A549 (cell line): ENCODE measurements at regions of chr20 and their contacts with region 1.

Region 1: GRCh38 chr20:31661625-31662371 is 24.1 kb downstream of the COX4I2 start:
- DNase-seq: peak; percentile 68 to 83
- ATAC-seq: peak; percentile 72 to 84
- H3K4me3 ChIP-seq: peak overlapping the region; percentile 32
- H3K27ac ChIP-seq: peak overlapping the region; percentile 85 to 88
- H3K4me1 ChIP-seq: peaks cover 60% of the 10 kb centered on the region
- CTCF ChIP-seq: peak; percentile 58
- EP300 ChIP-seq: no peak
- POLR2A ChIP-seq: peak; percentile 38
- RAD21 ChIP-seq: peak; percentile 64 to 85

Region 2: GRCh38 chr20:31551581-31552081 is 110.2 kb before region 1 on chr20:
- CTCF ChIA-PET with region 1: no interaction called
- POLR2A ChIA-PET with region 1: no interaction called
- DNase-seq: no peak
- ATAC-seq: no peak
- H3K4me3 ChIP-seq: no peak overlapping the region
- H3K27ac ChIP-seq: no peak overlapping the region
- H3K4me1 ChIP-seq: no peaks in the 10 kb centered on the region
- CTCF ChIP-seq: no peak
- EP300 ChIP-seq: no peak
- POLR2A ChIP-seq: no peak
- RAD21 ChIP-seq: no peak

Region 3: GRCh38 chr20:31595654-31596411 is 66.0 kb before region 1 on chr20:
- CTCF ChIA-PET with region 1: no interaction called
- POLR2A ChIA-PET with region 1: no interaction called
- DNase-seq: peak; percentile 74 to 95
- ATAC-seq: peak; percentile 68 to 74
- H3K4me3 ChIP-seq: peak overlapping the region; percentile 62
- H3K27ac ChIP-seq: peak overlapping the region; percentile 98
- H3K4me1 ChIP-seq: peaks cover 48% of the 10 kb centered on the region
- CTCF ChIP-seq: no peak
- EP300 ChIP-seq: peak in 1 of 2 experiments; percentile 55; a peak in 2 of 5 replicates
- POLR2A ChIP-seq: peak; percentile 42
- RAD21 ChIP-seq: no peak

Region 4: DNA sequence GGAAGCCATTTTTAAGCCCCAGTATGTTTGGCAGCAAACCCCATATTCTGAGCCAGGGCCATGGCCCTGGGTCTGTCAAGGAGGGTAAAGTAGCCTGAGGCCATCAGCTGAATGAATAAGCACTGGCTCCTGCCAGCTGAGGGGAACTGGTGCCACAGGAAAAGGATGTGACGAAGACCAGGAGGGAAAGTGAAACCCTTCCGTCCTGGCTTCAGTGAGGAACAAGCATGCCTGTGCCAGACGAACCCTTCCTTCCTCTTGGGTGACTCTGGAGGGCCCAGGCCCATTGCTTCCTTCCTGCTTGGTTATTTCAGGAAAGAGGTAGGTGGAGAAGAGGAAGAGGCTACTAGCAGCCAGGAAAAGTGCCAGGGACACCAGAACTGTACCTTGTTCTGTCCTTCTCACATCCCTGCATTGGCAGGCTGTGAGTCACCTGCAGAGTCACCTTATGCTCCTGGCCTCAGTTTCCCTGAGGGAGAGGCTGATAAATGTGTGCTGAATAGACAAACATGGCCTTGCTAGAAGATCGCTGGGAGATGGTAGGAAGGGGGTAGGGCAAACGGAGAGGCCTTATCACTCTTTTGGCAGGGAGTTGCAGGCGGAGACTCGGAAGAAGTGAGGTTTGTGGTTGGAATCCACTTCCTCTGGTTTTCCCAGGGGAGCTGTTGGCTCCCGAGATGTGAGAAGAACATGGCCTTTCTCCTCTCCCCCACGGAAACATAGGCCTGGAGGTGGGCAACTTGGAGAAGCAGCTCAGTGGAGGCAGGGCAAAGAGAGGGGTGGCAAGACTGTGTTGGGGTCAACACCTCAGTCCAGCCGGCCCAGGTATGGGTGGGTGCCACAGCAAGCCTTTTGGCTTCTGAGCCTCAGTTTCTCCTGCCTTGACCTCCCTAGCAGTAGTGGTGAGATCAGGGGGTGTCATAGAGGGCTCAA is 13.4 kb after region 1 on chr20:
- CTCF ChIA-PET with region 1: interaction called, 22 read pairs
- POLR2A ChIA-PET with region 1: interaction called, 5 read pairs
- DNase-seq: no peak
- ATAC-seq: peak in 1 of 2 experiments; percentile 10; a peak in 1 of 6 replicates
- H3K4me3 ChIP-seq: no peak overlapping the region
- H3K27ac ChIP-seq: peak overlapping the region; percentile 25 to 75; a peak in 5 of 6 replicates
- H3K4me1 ChIP-seq: peaks cover 97% of the 10 kb centered on the region
- CTCF ChIP-seq: no peak
- EP300 ChIP-seq: no peak
- POLR2A ChIP-seq: no peak
- RAD21 ChIP-seq: no peak

Region 5: DNA sequence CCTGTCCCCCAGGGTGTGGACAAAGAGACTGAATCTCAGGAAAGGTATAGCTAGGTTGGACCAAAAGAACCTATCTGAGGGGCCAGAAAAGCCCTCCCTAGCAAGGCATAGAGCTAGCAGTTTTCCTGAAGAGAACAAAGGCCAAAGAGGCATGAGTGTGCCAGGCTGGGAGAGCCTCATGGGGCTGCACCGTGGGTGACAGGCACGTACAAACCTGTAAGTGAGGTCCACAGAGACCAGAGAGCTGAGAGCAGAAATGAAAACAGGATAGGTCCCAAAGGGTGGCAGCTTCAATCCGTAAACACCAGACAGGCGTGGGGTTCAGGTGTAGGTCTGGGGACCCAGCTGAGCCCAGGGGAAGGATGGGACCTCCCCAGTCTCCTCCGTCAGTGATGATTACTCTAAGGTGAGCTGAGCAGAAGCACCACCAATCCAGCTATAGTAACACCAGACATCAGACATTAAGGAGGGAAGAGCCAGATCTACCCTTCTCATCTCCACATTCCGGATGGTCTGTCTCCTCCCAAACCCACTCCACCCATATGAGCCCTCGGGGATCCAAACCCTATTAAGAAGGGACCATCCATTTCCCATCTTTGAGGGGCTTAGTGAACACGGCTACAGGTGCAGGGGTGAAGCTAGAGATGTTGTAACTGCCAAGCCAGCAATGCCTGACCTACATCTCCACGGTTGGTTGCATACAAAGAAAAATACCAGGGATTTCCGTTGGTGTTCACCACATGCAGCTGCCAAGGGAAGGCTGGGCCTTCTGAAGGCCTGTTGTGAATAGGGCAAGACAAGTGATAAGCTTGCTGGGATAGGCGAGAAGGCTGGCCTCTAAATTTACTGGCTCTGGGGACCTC is 22.6 kb after region 1 on chr20:
- CTCF ChIA-PET with region 1: interaction called, 23 read pairs
- POLR2A ChIA-PET with region 1: no interaction called
- DNase-seq: no peak
- ATAC-seq: no peak
- H3K4me3 ChIP-seq: no peak overlapping the region
- H3K27ac ChIP-seq: peak overlapping the region in 1 of 2 experiments; percentile 68; a peak in 3 of 6 replicates
- H3K4me1 ChIP-seq: peaks cover 93% of the 10 kb centered on the region
- CTCF ChIP-seq: no peak
- EP300 ChIP-seq: no peak
- POLR2A ChIP-seq: no peak
- RAD21 ChIP-seq: no peak

Region 6: GRCh38 chr20:31691646-31692275 is 30.0 kb after region 1 on chr20:
- CTCF ChIA-PET with region 1: interaction called, 21 read pairs
- POLR2A ChIA-PET with region 1: interaction called, 11 read pairs
- DNase-seq: no peak
- ATAC-seq: no peak
- H3K4me3 ChIP-seq: no peak overlapping the region
- H3K27ac ChIP-seq: peak overlapping the region; percentile 49 to 95
- H3K4me1 ChIP-seq: peaks cover 94% of the 10 kb centered on the region
- CTCF ChIP-seq: no peak
- EP300 ChIP-seq: no peak
- POLR2A ChIP-seq: no peak
- RAD21 ChIP-seq: no peak

Region 7: GRCh38 chr20:31698803-31699718 is 37.3 kb after region 1 on chr20:
- CTCF ChIA-PET with region 1: interaction called, 22 read pairs
- POLR2A ChIA-PET with region 1: no interaction called
- DNase-seq: peak; percentile 63 to 87
- ATAC-seq: peak; percentile 59 to 74
- H3K4me3 ChIP-seq: no peak overlapping the region
- H3K27ac ChIP-seq: peak overlapping the region; percentile 89 to 95
- H3K4me1 ChIP-seq: peaks cover 100% of the 10 kb centered on the region
- CTCF ChIP-seq: no peak
- EP300 ChIP-seq: peak; percentile 39 to 58; a peak in 2 of 5 replicates
- POLR2A ChIP-seq: no peak
- RAD21 ChIP-seq: no peak

Region 8: GRCh38 chr20:31712564-31713311 is 50.9 kb after region 1 on chr20:
- CTCF ChIA-PET with region 1: interaction called, 489 read pairs
- POLR2A ChIA-PET with region 1: interaction called, 14 read pairs
- DNase-seq: peak; percentile 80 to 95
- ATAC-seq: peak; percentile 63 to 77
- H3K4me3 ChIP-seq: peak overlapping the region; percentile 13; the same call in 1 of the 3 replicates
- H3K27ac ChIP-seq: peak overlapping the region; percentile 95 to 96
- H3K4me1 ChIP-seq: peaks cover 96% of the 10 kb centered on the region
- CTCF ChIP-seq: no peak
- EP300 ChIP-seq: peak; percentile 82 to 96; a peak in 4 of 5 replicates
- POLR2A ChIP-seq: no peak
- RAD21 ChIP-seq: peak; percentile 1 to 29; a peak in 1 of 5 replicates

Region 9: GRCh38 chr20:31731321-31731717 is 69.5 kb after region 1 on chr20:
- CTCF ChIA-PET with region 1: interaction called, 31 read pairs
- POLR2A ChIA-PET with region 1: no interaction called
- DNase-seq: no peak
- ATAC-seq: no peak
- H3K4me3 ChIP-seq: no peak overlapping the region
- H3K27ac ChIP-seq: peak overlapping the region in 1 of 2 experiments; percentile 47; a peak in 3 of 6 replicates
- H3K4me1 ChIP-seq: 0 out of 3 replicates have a peak, but pooled peaks cover 3% of the 10 kb centered on the region
- CTCF ChIP-seq: no peak
- EP300 ChIP-seq: no peak
- POLR2A ChIP-seq: no peak
- RAD21 ChIP-seq: no peak

Region 10: GRCh38 chr20:31849455-31849925 is 187.7 kb after region 1 on chr20:
- CTCF ChIA-PET with region 1: no interaction called
- POLR2A ChIA-PET with region 1: no interaction called
- DNase-seq: no peak
- ATAC-seq: no peak
- H3K4me3 ChIP-seq: no peak overlapping the region
- H3K27ac ChIP-seq: no peak overlapping the region
- H3K4me1 ChIP-seq: peaks cover 17% of the 10 kb centered on the region
- CTCF ChIP-seq: no peak
- EP300 ChIP-seq: no peak
- POLR2A ChIP-seq: no peak
- RAD21 ChIP-seq: no peak